GM10248 (cell line): ENCODE measurements at regions of chr17 and their contacts with region 1.

Region 1: DNA sequence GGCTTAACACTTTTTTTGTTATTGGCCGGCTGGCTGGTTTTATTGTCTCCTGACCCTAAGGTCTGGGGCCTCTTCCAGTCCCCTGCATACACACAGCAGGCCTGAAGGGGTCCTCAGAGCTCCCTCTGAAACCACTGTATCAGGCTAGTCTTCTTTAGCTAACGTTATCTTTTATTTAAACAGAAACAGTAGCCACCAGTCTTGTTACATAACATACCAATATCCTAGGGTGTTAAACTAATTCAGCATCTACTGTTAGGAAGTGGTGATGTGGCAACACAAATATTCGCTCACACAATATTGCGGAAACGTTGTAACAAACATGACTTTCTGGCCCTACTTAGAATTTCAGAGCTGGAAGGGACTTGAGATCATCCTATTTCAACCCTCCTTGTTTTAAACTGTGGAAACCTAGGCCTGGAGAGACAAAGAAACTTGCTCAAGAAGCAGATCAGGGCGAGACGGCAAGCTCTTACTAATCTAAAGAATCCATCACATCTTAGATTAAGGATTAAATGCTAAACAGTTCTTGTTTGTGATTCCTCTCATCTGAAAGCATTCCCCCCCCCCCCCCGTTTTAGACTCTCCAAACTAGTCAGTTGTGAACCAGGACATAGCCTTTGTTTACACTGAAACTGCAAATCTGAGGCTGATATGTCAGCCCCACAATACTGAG is 1.7 kb upstream of the YPEL2 start:
- DNase-seq: peak; percentile 71
- CTCF ChIP-seq: peak; percentile 84

Region 2: GRCh38 chr17:59277031-59277430 is 52.7 kb before region 1 on chr17:
- CTCF ChIA-PET with region 1: no interaction called
- POLR2A ChIA-PET with region 1: no interaction called
- DNase-seq: peak; percentile 74
- CTCF ChIP-seq: no peak

Region 3: DNA sequence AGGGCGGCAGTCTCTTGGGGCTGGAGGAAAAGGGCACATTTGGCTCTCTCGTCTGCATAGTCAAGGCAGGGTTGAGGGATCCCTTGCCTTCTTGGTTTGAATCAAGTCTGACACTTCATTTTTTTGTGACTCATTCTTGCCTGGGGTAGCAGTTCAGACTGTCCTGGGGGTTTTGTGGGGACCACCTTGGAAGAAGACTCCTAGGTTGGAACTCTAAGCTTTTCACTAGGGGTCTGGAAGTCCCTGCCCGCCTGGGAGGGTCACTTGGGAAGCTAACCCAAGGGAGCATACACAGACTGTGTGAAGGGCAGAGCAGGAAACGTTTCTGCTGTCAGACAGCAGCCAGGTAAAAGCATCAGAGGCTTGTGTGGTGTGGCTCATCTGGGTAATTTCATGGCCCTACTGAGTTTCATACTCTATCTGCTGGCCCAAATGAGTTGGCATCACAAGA is 12.9 kb after region 1 on chr17:
- CTCF ChIA-PET with region 1: interaction called, 13 read pairs
- POLR2A ChIA-PET with region 1: no interaction called
- DNase-seq: no peak
- CTCF ChIP-seq: no peak

Region 4: GRCh38 chr17:59355696-59356325 is 26.0 kb after region 1 on chr17:
- CTCF ChIA-PET with region 1: interaction called, 12 read pairs
- POLR2A ChIA-PET with region 1: no interaction called
- DNase-seq: no peak
- CTCF ChIP-seq: no peak

Region 5: DNA sequence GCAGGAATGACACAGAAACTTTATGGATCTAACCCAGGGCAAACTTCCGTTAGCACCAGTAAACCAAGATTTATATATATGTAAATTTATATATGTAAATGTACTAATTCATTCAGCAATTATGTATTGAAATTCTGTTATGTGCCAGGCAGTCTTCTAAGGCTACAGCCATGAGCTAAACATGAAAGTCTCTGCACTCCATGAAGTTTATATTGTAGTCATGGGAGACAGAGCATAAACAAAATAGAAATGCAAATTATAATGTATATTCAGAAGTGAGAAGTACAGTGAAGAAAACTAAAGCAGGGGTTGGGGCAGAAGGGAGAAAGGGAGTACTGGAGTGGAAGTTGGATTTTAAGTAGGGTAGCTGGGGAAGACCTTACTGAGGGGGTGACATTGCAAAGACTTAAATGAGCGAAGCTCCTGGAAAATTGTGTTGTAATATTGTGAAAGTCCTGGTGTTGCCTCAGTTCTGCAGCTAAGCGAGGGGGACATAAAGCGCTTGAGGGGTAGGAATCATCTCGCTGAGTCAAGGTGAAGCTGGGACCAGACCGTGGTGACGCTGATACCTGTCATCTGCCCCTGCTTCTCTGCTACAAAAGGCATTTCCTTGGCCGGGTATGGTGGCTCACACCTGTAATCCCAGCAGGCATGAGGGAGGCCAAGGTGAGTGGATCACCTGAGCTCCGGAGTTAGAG is 66.5 kb after region 1 on chr17:
- CTCF ChIA-PET with region 1: no interaction called
- POLR2A ChIA-PET with region 1: no interaction called
- DNase-seq: no peak
- CTCF ChIP-seq: no peak

Region 6: GRCh38 chr17:59483860-59484259 is 154.1 kb after region 1 on chr17:
- CTCF ChIA-PET with region 1: no interaction called
- POLR2A ChIA-PET with region 1: no interaction called
- DNase-seq: no peak
- CTCF ChIP-seq: no peak